Body of pancreas (tissue), 4 donors: ENCODE measurements at regions of chr1 and their contacts with region 1.

Region 1: GRCh38 chr1:180178511-180179161 is 24.0 kb downstream of the QSOX1 start:
- DNase-seq: peak; percentile 69 to 83 (median 76)
- ATAC-seq: peak; percentile 68
- H3K4me3 ChIP-seq: no peak overlapping the region
- H3K27ac ChIP-seq: no peak overlapping the region
- H3K4me1 ChIP-seq: peaks cover 12% of the 10 kb centered on the region
- H3K27me3 ChIP-seq: no peaks in the 10 kb centered on the region
- CTCF ChIP-seq: peak; percentile 89 to 97 (median 95)
- POLR2A ChIP-seq: no peak

Region 2: DNA sequence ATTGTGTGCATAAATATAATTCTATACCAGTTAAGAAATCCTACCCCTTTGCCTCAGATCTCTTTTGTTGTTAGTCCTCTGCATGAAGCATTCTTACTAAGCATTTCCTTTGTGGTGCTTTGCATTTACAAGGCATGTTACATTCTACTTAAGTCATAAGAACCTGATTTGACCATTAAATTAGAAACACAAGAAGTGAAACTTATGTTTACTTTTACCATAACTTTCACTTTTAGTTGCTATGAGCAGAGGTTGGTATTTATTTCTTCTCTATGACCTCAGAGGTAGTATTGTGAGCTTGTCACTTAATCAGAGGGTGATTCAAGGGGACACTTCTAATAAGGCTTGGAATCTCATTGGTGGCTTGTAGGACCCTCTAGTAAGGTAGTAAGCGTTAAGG is 1143.9 kb before region 1 on chr1:
- intact Hi-C with region 1: no loop called
- DNase-seq: no peak
- ATAC-seq: no peak
- H3K4me3 ChIP-seq: no peak overlapping the region
- H3K27ac ChIP-seq: peak overlapping the region in 1 of 4 donors; percentile 9
- H3K4me1 ChIP-seq: peaks cover 56% of the 10 kb centered on the region
- H3K27me3 ChIP-seq: no peaks in the 10 kb centered on the region
- CTCF ChIP-seq: no peak
- POLR2A ChIP-seq: no peak

Region 3: DNA sequence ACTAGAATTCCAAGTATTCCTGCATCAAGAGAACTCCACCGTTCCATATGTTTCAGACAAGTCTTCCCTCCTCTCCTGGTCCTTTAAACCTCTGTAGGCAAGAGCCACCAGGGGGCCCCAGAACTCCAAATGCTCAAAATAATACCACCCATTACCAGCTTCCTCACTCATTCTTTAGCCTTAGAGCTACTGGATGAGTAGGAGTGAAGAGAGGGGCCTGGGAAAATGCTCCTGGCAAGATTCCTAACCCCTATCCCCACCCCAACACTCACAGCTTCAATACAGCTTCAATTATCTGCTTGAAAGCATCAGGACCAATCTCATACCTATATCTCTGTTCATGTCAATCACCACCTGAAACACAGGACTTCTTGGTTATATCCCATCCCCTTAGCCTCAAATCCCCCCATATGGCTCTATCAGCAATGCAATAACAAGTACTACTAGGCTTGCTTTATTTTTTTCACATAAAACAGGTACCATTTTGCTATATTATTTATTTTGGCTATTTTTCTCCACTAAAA is 310.8 kb before region 1 on chr1:
- intact Hi-C with region 1: loop called (anchors 10 kb)
- DNase-seq: peak; percentile 45 to 76 (median 66)
- ATAC-seq: peak; percentile 71
- H3K4me3 ChIP-seq: no peak overlapping the region
- H3K27ac ChIP-seq: no peak overlapping the region
- H3K4me1 ChIP-seq: peaks cover 40% of the 10 kb centered on the region
- H3K27me3 ChIP-seq: no peaks in the 10 kb centered on the region
- CTCF ChIP-seq: peak; percentile 53 to 75 (median 66)
- POLR2A ChIP-seq: no peak

Region 4: GRCh38 chr1:180123463-180123936 is 55.1 kb before region 1 on chr1:
- intact Hi-C with region 1: loop called (anchors 10 kb)
- DNase-seq: peak in 1 of 4 donors; percentile 26
- ATAC-seq: no peak
- H3K4me3 ChIP-seq: no peak overlapping the region
- H3K27ac ChIP-seq: no peak overlapping the region
- H3K4me1 ChIP-seq: no peaks in the 10 kb centered on the region
- H3K27me3 ChIP-seq: no peaks in the 10 kb centered on the region
- CTCF ChIP-seq: no peak
- POLR2A ChIP-seq: no peak